CD8-positive, alpha-beta T cell (primary cell): ENCODE measurements at regions of chr2 and their contacts with region 1.

Region 1: GRCh38 chr2:136129601-136130000 is 11.7 kb upstream of the CXCR4 start:
- DNase-seq: peak in 6 of 9 experiments; percentile 37 to 94 (median 64)
- ATAC-seq: peak; percentile 34
- H3K4me3 ChIP-seq: peak overlapping the region; percentile 9 to 18
- H3K4me3 Mint-ChIP-seq: peak overlapping the region; percentile 76
- H3K27ac ChIP-seq: peak overlapping the region; percentile 91 to 98
- H3K27ac Mint-ChIP-seq: peak overlapping the region; percentile 100
- H3K4me1 ChIP-seq: peaks cover 90% of the 10 kb centered on the region
- H3K4me1 Mint-ChIP-seq: peaks cover 96% of the 10 kb centered on the region
- H3K27me3 ChIP-seq: no peaks in the 10 kb centered on the region
- H3K27me3 Mint-ChIP-seq: no peaks in the 10 kb centered on the region
- CTCF ChIP-seq: no peak

Region 2: DNA sequence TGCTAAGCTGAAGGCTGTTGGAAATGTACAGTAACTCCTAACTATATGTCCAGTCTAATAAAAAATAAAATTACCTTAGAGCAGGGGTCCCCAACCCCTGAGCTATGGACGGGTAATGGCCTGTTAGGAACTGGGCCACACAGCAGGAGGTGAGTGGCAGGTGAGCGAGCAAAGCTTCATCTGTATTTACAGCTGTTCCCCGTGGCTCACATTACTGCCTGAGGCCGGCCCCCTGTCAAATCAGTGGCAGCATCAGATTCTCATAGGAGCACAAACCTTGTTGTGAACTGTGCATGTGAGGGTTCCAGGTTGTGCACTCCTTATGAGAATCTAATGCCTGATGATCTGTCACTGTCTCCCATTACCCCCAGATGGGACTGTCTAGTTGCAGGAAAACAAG is 61.4 kb after region 1 on chr2:
- CTCF ChIA-PET with region 1: no interaction called
- POLR2A ChIA-PET with region 1: no interaction called
- intact Hi-C with region 1: no loop called
- DNase-seq: no peak
- ATAC-seq: no peak
- H3K4me3 ChIP-seq: no peak overlapping the region
- H3K4me3 Mint-ChIP-seq: no peak overlapping the region
- H3K27ac ChIP-seq: no peak overlapping the region
- H3K27ac Mint-ChIP-seq: no peak overlapping the region
- H3K4me1 ChIP-seq: no peaks in the 10 kb centered on the region
- H3K4me1 Mint-ChIP-seq: peaks cover 3% of the 10 kb centered on the region
- H3K27me3 ChIP-seq: no peaks in the 10 kb centered on the region
- H3K27me3 Mint-ChIP-seq: no peaks in the 10 kb centered on the region
- CTCF ChIP-seq: no peak

Region 3: DNA sequence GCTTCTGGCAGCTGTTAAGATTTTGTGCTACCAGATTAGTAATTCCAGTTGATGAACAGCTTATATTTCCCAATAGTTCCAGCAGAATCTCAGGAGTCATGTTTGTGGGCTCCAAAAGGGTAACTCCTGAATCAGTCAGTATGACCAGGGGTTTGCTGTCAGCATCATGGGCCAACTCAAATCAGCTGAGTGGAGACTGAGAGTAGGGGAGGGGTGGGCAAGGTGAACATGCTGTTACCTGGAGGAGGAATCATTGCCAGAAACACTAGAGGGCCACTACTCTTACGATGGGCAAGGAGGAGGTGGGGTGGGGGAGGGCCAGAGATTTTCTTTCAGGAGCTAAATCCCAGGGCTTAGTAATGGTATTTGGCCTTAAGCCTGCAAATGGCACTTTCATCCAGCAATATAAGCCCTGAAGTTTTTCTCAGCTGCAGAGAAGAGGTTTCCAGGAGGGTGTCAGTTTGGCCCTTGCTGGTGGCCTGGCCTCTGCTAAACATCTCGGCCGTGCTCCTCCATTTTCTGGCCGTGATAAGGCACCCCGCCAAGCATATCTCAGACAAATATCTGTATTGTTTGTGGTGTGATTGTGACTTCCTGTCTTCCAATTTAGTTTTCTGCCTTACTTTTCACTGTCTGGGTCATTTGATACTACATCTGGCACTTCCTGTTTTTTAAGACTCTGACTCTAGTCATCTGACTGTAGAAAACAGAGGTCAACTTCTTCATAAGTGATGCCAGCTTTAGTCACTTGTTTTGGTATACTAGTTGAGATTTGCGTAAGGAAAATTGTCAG is 108.9 kb after region 1 on chr2:
- CTCF ChIA-PET with region 1: interaction called, 3 read pairs
- POLR2A ChIA-PET with region 1: interaction called, 19 read pairs
- intact Hi-C with region 1: loop called in 1 of 2 experiments (anchors 2 kb)
- DNase-seq: peak; percentile 29 to 89 (median 65)
- ATAC-seq: peak; percentile 75
- H3K4me3 ChIP-seq: peak overlapping the region in 1 of 2 experiments; percentile 13
- H3K4me3 Mint-ChIP-seq: peak overlapping the region; percentile 30
- H3K27ac ChIP-seq: peak overlapping the region; percentile 64 to 83
- H3K27ac Mint-ChIP-seq: peak overlapping the region; percentile 91
- H3K4me1 ChIP-seq: peaks cover 31% of the 10 kb centered on the region
- H3K4me1 Mint-ChIP-seq: peaks cover 56% of the 10 kb centered on the region
- H3K27me3 ChIP-seq: no peaks in the 10 kb centered on the region
- H3K27me3 Mint-ChIP-seq: no peaks in the 10 kb centered on the region
- CTCF ChIP-seq: no peak